ENCODE measurements at regions of chr1 and their contacts with region 1.

Region 1: GRCh38 chr1:66436378-66437145 is 97.4 kb upstream of the SGIP1 start:
- DNase-seq: peak; percentile 62
- H3K4me3 Mint-ChIP-seq: no peak overlapping the region
- H3K27ac Mint-ChIP-seq: peak overlapping the region; percentile 57
- H3K4me1 Mint-ChIP-seq: peaks cover 44% of the 10 kb centered on the region
- H3K27me3 Mint-ChIP-seq: no peaks in the 10 kb centered on the region

Region 2: GRCh38 chr1:66258404-66259105 is 178.0 kb before region 1 on chr1:
- CTCF ChIA-PET with region 1: interaction called, 422 read pairs
- POLR2A ChIA-PET with region 1: interaction called, 5 read pairs
- DNase-seq: no peak
- H3K4me3 Mint-ChIP-seq: no peak overlapping the region
- H3K27ac Mint-ChIP-seq: peak overlapping the region; percentile 21
- H3K4me1 Mint-ChIP-seq: peaks cover 74% of the 10 kb centered on the region
- H3K27me3 Mint-ChIP-seq: no peaks in the 10 kb centered on the region

Region 3: GRCh38 chr1:66342707-66343106 is 93.9 kb before region 1 on chr1:
- CTCF ChIA-PET with region 1: interaction called, 15 read pairs
- POLR2A ChIA-PET with region 1: interaction called, 5 read pairs
- DNase-seq: no peak
- H3K4me3 Mint-ChIP-seq: peak overlapping the region; percentile 31
- H3K27ac Mint-ChIP-seq: peak overlapping the region; percentile 68
- H3K4me1 Mint-ChIP-seq: peaks cover 83% of the 10 kb centered on the region
- H3K27me3 Mint-ChIP-seq: no peaks in the 10 kb centered on the region

Region 4: DNA sequence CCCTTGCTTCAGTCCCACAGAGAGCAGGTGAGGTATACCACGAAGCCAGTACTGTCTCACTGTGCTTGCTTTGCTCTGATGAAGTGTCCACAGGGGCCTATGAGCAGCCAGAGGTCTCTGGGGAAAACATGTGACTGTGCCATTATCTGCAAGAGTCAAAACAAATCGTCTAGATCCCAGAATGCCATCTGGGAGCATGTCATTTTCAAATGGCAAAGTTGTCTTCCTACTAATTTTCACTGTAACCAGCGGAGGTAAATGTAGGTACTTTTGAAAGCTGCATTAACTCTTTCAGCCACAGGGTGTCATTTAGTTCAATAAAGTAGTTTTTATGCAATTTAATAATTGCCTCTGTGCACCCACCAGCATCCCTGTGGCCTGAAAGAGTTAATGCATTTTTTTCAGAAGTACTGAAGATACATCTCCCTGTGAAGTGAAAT is 76.3 kb before region 1 on chr1:
- CTCF ChIA-PET with region 1: interaction called, 18 read pairs
- POLR2A ChIA-PET with region 1: interaction called, 3 read pairs
- DNase-seq: no peak
- H3K4me3 Mint-ChIP-seq: no peak overlapping the region
- H3K27ac Mint-ChIP-seq: no peak overlapping the region
- H3K4me1 Mint-ChIP-seq: peaks cover 85% of the 10 kb centered on the region
- H3K27me3 Mint-ChIP-seq: no peaks in the 10 kb centered on the region

Region 5: GRCh38 chr1:66464802-66465201 is 28.2 kb after region 1 on chr1:
- CTCF ChIA-PET with region 1: no interaction called
- POLR2A ChIA-PET with region 1: no interaction called
- DNase-seq: no peak
- H3K4me3 Mint-ChIP-seq: no peak overlapping the region
- H3K27ac Mint-ChIP-seq: no peak overlapping the region
- H3K4me1 Mint-ChIP-seq: no peaks in the 10 kb centered on the region
- H3K27me3 Mint-ChIP-seq: peaks cover 20% of the 10 kb centered on the region

Region 6: GRCh38 chr1:66598670-66599069 is 162.1 kb after region 1 on chr1:
- CTCF ChIA-PET with region 1: no interaction called
- POLR2A ChIA-PET with region 1: no interaction called
- DNase-seq: no peak
- H3K4me3 Mint-ChIP-seq: no peak overlapping the region
- H3K27ac Mint-ChIP-seq: no peak overlapping the region
- H3K4me1 Mint-ChIP-seq: peaks cover 9% of the 10 kb centered on the region
- H3K27me3 Mint-ChIP-seq: peaks cover 13% of the 10 kb centered on the region